ENCODE measurements at regions of chr7 and their contacts with region 1.

Region 1: GRCh38 chr7:32479574-32480200 is 10.5 kb downstream of the LSM5 start:
- DNase-seq: peak in 1 of 2 donors; percentile 75
- H3K4me3 ChIP-seq: no peak overlapping the region
- H3K27ac ChIP-seq: no peak overlapping the region
- H3K4me1 ChIP-seq: no peaks in the 10 kb centered on the region
- H3K27me3 ChIP-seq: no peaks in the 10 kb centered on the region
- CTCF ChIP-seq: peak in 5 of 7 experiments; percentile 30 to 71 (median 49)
- EP300 ChIP-seq: no peak
- POLR2A ChIP-seq: no peak

Region 2: DNA sequence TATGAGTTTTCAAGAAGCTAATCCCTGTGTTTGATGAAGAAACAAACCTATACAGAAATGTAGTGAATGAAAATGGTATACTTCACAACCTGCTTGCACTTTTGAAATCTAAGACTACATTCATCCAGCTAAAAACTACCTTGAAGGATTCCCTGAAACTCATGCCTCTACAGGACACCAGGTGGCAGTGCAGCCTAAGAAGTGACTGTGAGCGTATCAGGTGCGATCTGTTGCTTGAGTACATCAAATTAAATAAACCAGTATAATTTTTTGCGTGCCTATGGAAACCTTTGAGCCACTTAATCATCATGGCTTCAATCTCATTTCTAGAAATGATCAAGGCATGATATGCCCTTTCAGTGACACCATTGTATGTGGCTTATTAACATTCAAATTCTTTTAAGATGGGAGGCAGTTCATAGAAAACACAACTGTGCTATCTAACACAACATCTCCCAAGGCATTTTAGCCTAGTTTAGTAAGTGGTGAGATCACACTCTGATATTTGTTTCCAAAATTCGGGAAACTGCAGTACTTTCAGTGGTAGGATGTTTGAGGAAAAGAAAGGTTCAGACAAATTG is 735.3 kb before region 1 on chr7:
- intact Hi-C with region 1: loop called (anchors 10 kb)
- DNase-seq: peak; percentile 61 to 85
- H3K4me3 ChIP-seq: no peak overlapping the region
- H3K27ac ChIP-seq: no peak overlapping the region
- H3K4me1 ChIP-seq: no peaks in the 10 kb centered on the region
- H3K27me3 ChIP-seq: peaks cover 0 to 10% (median 0%) of the 10 kb centered on the region in 3 donors
- CTCF ChIP-seq: peak in 5 of 7 experiments; percentile 61 to 90 (median 83)
- EP300 ChIP-seq: no peak
- POLR2A ChIP-seq: no peak

Region 3: GRCh38 chr7:32266932-32267475 is 212.7 kb before region 1 on chr7:
- intact Hi-C with region 1: no loop called
- DNase-seq: no peak
- H3K4me3 ChIP-seq: no peak overlapping the region
- H3K27ac ChIP-seq: no peak overlapping the region
- H3K4me1 ChIP-seq: no peaks in the 10 kb centered on the region
- H3K27me3 ChIP-seq: no peaks in the 10 kb centered on the region
- CTCF ChIP-seq: no peak
- EP300 ChIP-seq: no peak
- POLR2A ChIP-seq: no peak

Measured in stomach (tissue), 19 donors.